Sigmoid colon (tissue), 7 donors: ENCODE measurements at regions of chr11 and their contacts with region 1.

Region 1: DNA sequence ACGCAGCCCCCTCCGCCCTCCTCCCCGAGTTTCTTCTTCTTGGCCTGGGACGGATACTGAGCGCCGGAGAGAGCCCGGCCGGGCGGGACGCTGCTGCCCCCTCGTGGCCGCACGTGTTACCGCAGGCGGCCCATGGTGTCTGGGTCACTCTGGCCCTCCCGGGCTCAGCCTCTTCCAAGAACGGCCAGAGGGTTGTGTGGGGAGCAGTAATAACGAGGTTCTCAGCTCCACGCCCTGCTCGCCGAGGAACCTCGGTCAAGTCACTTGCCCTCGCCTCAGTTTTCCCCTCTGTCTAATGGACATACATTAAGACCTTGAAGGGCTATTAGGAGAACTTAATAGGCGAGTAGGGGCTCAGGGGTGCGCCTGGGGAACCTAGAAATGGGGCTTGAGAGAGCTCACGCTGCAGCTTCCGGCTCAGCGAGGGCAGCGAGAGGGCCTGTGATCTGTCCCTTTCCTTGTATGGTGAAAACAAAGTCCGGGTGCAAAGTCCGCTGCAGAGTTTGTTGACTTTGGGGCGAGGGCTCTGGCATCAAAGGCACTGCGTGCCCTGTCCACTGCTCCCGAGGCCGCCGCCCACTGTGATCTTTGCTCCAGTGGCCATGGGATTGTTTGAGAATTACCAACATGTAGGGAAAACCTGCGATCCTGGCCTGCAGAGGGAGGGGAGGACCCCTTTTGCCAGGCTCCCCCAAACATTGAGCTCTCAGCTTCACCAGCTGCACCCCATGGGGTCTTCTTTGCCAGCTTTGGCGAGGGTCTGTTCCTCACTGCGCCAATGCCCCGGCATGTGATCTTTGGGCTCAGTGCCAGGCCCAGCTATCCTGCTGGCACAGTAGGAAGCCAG is 14.4 kb upstream of the LRP5 start:
- DNase-seq: peak; percentile 86
- H3K4me3 ChIP-seq: peak overlapping the region in 1 of 4 donors; percentile 19
- H3K27ac ChIP-seq: no peak overlapping the region
- H3K4me1 ChIP-seq: peaks cover 0 to 12% (median 8%) of the 10 kb centered on the region in 4 donors
- H3K27me3 ChIP-seq: no peaks in the 10 kb centered on the region
- CTCF ChIP-seq: peak; percentile 95 to 99 (median 98)
- EP300 ChIP-seq: no peak
- POLR2A ChIP-seq: no peak

Region 2: DNA sequence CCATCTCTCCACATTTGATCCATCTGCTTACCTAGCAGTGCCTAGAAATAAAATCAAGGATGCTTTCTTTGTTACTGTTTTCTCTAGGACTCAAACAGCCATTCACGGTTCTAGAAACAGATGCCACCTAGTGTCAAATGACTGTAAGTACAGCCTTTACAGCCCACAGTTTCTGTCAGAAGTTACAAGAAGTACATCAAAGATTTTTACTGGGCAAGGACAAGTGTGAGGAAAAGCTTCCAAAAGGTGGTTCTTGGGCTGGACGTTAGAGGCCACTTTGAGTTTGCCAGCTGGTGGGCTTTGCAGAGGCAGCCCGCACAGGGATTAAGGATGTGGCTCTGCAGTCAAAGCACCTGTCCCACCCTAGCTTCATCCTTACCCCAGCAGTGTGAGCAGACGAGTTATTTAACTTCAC is 91.8 kb before region 1 on chr11:
- intact Hi-C with region 1: loop called (anchors 5 kb)
- DNase-seq: no peak
- H3K4me3 ChIP-seq: no peak overlapping the region
- H3K27ac ChIP-seq: peak overlapping the region in 3 of 4 donors; percentile 11 to 64 (median 48)
- H3K4me1 ChIP-seq: peaks cover 0 to 69% (median 60%) of the 10 kb centered on the region in 4 donors
- H3K27me3 ChIP-seq: no peaks in the 10 kb centered on the region
- CTCF ChIP-seq: peak; percentile 66 to 84 (median 77)
- EP300 ChIP-seq: no peak
- POLR2A ChIP-seq: no peak

Region 3: GRCh38 chr11:68257475-68258362 is 40.3 kb before region 1 on chr11:
- intact Hi-C with region 1: loop called (anchors 1 kb)
- DNase-seq: peak; percentile 98
- H3K4me3 ChIP-seq: peak overlapping the region in 2 of 4 donors; percentile 28 to 31
- H3K27ac ChIP-seq: peak overlapping the region in 3 of 4 donors; percentile 21 to 54 (median 34)
- H3K4me1 ChIP-seq: peaks cover 0 to 19% (median 11%) of the 10 kb centered on the region in 4 donors
- H3K27me3 ChIP-seq: no peaks in the 10 kb centered on the region
- CTCF ChIP-seq: peak; percentile 87 to 92 (median 90)
- EP300 ChIP-seq: no peak
- POLR2A ChIP-seq: no peak

Region 4: DNA sequence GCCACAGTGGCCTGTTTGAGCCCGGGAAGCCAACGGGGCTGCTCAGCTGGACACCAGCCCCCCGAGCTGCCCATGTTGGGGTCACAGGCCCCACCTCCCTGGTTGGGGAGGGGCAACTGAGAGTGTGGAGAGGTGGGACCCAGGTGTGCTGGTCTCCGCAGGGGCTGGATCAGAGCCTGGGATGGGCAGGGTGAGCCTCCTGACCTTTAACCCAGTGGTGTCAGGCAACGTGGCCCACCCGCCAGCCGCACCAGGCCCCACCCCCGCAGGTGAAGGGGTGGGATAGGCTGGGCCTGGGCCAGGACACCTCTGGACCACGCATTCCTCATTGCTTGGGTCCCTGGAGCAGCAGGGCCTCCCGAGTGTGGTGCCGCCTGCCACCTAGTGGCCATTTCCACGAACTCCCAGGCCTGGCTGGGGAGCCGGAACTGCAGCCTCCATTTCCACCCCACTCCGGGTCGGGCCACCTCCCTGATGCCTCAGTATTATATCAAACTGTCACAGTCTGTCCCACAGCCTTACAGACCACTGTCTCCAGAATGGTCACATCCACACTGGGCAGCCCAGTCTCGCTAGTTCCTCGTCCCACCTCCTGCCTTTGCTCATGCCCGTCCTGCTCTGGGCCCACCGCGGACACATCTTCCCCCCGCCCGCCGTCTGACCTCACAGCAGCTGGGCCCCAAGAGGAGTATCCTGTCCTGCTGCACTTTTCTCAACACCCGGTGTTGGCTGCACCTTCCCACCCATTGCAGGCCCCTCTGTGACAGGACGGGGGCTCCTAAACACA is 149.2 kb after region 1 on chr11:
- intact Hi-C with region 1: loop called (anchors 1 kb)
- DNase-seq: peak; percentile 90
- H3K4me3 ChIP-seq: no peak overlapping the region
- H3K27ac ChIP-seq: peak overlapping the region in 3 of 4 donors; percentile 22 to 34 (median 25)
- H3K4me1 ChIP-seq: peaks cover 0 to 24% (median 13%) of the 10 kb centered on the region in 4 donors
- H3K27me3 ChIP-seq: no peaks in the 10 kb centered on the region
- CTCF ChIP-seq: peak; percentile 75 to 96 (median 93)
- EP300 ChIP-seq: no peak
- POLR2A ChIP-seq: no peak